Natural killer cell (primary cell): ENCODE measurements at regions of chr7 and their contacts with region 1.

Region 1: GRCh38 chr7:74173866-74174605 is at the start of gene EIF4H:
- DNase-seq: peak; percentile 97 to 98
- ATAC-seq: peak; percentile 86 to 97 (median 88)
- H3K4me3 ChIP-seq: peak within 1 kb of the TSS; percentile 79
- H3K4me3 Mint-ChIP-seq: peak within 1 kb of the TSS; percentile 95
- H3K27ac ChIP-seq: peak within 1 kb of the TSS; percentile 89
- H3K27ac Mint-ChIP-seq: peak within 1 kb of the TSS; percentile 91 to 92
- H3K4me1 ChIP-seq: peaks cover 32% of the 10 kb centered on the region
- H3K4me1 Mint-ChIP-seq: peaks cover 38% of the 10 kb centered on the region in 2 donors
- H3K27me3 ChIP-seq: no peaks in the 10 kb centered on the region
- H3K27me3 Mint-ChIP-seq: no peaks in the 10 kb centered on the region
- CTCF ChIP-seq: no peak
- total RNA-seq, gene EIF4H: 286 to 294 (median 294) TPM

Region 2: DNA sequence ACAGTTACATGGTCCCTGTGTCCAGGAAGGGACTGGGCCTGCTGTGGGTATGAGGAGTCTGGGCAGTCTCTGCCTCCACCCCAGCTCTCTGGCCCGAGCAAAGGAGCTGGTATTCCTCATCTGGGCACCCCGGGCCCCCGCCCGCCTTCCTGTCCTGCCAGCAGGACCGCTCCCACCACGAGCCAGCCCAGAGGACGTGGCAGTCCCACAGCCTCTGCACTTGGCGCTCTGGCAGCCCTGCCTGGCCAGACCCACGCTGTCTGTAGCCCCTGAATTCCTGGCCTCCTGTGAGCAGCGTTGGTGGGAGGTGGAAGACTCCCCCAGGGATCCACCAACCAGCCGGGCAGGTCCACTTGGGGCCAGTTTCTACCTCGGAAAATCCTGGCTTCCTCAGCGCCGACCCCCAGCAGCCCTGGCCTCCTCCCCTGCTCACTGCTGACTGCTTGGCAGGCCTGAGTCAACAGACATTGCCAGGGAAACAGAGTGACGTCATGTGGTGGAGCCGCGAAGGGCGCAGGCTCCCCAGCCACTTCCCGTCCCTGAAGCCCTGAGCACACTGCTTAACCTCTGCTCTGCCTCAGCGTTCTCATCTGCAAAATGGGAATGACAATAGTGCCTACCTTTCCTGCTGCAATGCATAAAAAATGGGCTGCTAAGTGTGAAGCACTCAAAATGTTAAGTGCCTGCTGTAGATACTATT is 112.0 kb before region 1 on chr7:
- intact Hi-C with region 1: loop called (anchors 10 kb)
- DNase-seq: peak; percentile 84 to 86
- ATAC-seq: peak; percentile 95 to 99 (median 95)
- H3K4me3 ChIP-seq: peak overlapping the region; percentile 21
- H3K4me3 Mint-ChIP-seq: peak overlapping the region; percentile 86
- H3K27ac ChIP-seq: peak overlapping the region; percentile 91
- H3K27ac Mint-ChIP-seq: peak overlapping the region; percentile 99 to 100
- H3K4me1 ChIP-seq: peaks cover 21% of the 10 kb centered on the region
- H3K4me1 Mint-ChIP-seq: peaks cover 8 to 18% of the 10 kb centered on the region in 2 donors
- H3K27me3 ChIP-seq: no peaks in the 10 kb centered on the region
- H3K27me3 Mint-ChIP-seq: peaks cover 0 to 3% of the 10 kb centered on the region in 2 donors
- CTCF ChIP-seq: no peak

Region 3: GRCh38 chr7:74254129-74254857 is 80.3 kb after region 1 on chr7 and contains the start of gene RFC2:
- intact Hi-C with region 1: loop called (anchors 1 kb)
- DNase-seq: peak; percentile 98 to 99
- ATAC-seq: peak; percentile 92 to 98 (median 95)
- H3K4me3 ChIP-seq: peak within 1 kb of the TSS; percentile 97
- H3K4me3 Mint-ChIP-seq: peak within 1 kb of the TSS; percentile 95
- H3K27ac ChIP-seq: peak within 1 kb of the TSS; percentile 90
- H3K27ac Mint-ChIP-seq: peak within 1 kb of the TSS; percentile 93 to 98
- H3K4me1 ChIP-seq: peaks cover 24% of the 10 kb centered on the region
- H3K4me1 Mint-ChIP-seq: peaks cover 18% of the 10 kb centered on the region in 2 donors
- H3K27me3 ChIP-seq: no peaks in the 10 kb centered on the region
- H3K27me3 Mint-ChIP-seq: no peaks in the 10 kb centered on the region
- CTCF ChIP-seq: no peak
- total RNA-seq, gene RFC2: 16.9 to 26.5 (median 20.5) TPM